ENCODE measurements at regions of chr1 and their contacts with region 1.

Region 1: GRCh38 chr1:48202030-48202752 is 20.3 kb upstream of the SLC5A9 start:
- DNase-seq: no peak
- ATAC-seq: peak; percentile 89
- H3K4me3 ChIP-seq: no peak overlapping the region
- H3K27ac ChIP-seq: no peak overlapping the region
- H3K4me1 ChIP-seq: no peaks in the 10 kb centered on the region
- H3K27me3 ChIP-seq: no peaks in the 10 kb centered on the region
- CTCF ChIP-seq: peak; percentile 91

Region 2: DNA sequence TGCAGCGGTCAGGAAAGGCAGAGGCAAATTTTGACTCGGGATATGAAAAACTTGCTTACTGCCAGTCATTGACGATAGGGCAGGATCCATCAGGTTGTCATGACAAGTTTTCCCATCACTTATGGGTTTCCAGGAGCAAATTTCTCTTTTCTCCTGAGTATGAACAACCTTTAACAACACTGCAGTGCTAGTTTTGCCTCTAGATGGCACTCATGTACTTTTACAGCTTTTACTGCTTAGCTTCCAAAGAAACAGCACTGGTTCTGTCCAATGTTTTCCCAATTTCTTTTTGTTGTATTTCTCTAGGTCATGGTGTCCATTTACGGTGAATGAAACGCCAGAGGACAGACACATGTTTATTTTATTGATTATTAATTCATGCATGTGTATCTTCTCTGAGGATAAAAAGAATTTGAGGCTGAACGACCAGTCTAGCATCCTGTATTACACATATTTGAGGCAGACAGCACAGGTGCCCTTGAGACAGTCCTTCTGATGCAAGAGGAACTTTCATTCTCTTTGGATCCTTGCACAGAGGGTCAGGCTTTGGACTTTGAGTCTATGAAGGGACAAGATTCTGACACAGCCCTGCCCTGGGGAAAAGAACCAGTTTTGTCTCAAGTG is 92.7 kb before region 1 on chr1:
- intact Hi-C with region 1: loop called (anchors 10 kb)
- DNase-seq: no peak
- ATAC-seq: peak; percentile 74
- H3K4me3 ChIP-seq: no peak overlapping the region
- H3K27ac ChIP-seq: no peak overlapping the region
- H3K4me1 ChIP-seq: no peaks in the 10 kb centered on the region
- H3K27me3 ChIP-seq: peaks cover 4% of the 10 kb centered on the region
- CTCF ChIP-seq: peak; percentile 81

Measured in upper lobe of right lung (tissue), 1 donor.